Aorta (tissue), 5 donors: ENCODE measurements at regions of chr14 and their contacts with region 1.

Region 1: GRCh38 chr14:26598081-26598795 is 405 bp upstream of the NOVA1 start:
- DNase-seq: peak; percentile 85 to 90
- ATAC-seq: peak; percentile 93
- H3K4me3 ChIP-seq: peak overlapping the region; percentile 83 to 84
- H3K27ac ChIP-seq: peak overlapping the region in 1 of 2 donors; percentile 7
- H3K4me1 ChIP-seq: peaks cover 0 to 1% of the 10 kb centered on the region in 2 donors
- H3K27me3 ChIP-seq: no peaks in the 10 kb centered on the region

Region 2: GRCh38 chr14:26394150-26394810 is 204.0 kb before region 1 on chr14:
- intact Hi-C with region 1: loop called in 1 of 2 experiments (anchors 5 kb)
- DNase-seq: no peak
- ATAC-seq: no peak
- H3K4me3 ChIP-seq: no peak overlapping the region
- H3K27ac ChIP-seq: no peak overlapping the region
- H3K4me1 ChIP-seq: peaks cover 0 to 2% of the 10 kb centered on the region in 2 donors
- H3K27me3 ChIP-seq: no peaks in the 10 kb centered on the region

Region 3: DNA sequence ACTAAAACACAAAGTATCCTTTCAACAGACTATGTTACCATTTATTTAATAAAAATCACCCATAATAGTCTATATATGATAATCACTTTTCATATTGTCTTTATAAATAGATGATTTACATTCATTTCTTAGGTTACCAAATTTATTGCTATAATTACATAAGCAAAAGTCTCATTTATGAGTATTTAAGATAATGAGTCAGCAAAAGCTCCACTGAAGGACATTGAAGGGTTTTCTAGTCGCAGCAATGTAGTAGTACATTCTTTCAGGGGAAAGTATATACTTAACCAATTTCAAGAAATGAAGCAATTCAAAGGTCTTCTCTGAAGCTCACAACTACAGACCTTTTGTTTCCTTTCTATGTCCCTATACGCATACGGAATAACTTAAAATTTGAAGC is 111.3 kb before region 1 on chr14:
- intact Hi-C with region 1: no loop called
- DNase-seq: no peak
- ATAC-seq: no peak
- H3K4me3 ChIP-seq: no peak overlapping the region
- H3K27ac ChIP-seq: no peak overlapping the region
- H3K4me1 ChIP-seq: no peaks in the 10 kb centered on the region
- H3K27me3 ChIP-seq: no peaks in the 10 kb centered on the region

Region 4: DNA sequence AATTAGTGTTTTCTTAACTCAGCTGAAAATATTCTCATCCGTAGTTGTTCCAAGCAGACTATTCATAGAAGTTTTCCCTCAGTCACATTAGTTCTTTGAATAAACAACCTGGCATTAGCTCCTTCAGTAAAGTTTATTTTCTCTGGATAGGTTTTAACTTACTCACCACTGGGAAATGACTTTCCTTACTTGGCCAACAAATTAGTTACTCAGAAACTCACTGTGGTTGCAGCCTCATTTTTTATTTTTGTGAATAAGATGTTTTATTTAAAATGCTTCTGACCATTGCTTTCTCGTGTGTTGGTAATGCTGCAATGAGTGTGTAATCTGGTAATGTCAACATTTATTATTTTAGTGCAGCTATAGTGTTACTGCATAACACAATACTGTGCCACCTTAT is 75.3 kb before region 1 on chr14:
- intact Hi-C with region 1: loop called (anchors 5 kb)
- DNase-seq: no peak
- ATAC-seq: peak; percentile 78
- H3K4me3 ChIP-seq: no peak overlapping the region
- H3K27ac ChIP-seq: no peak overlapping the region
- H3K4me1 ChIP-seq: peaks cover 4 to 5% of the 10 kb centered on the region in 2 donors
- H3K27me3 ChIP-seq: no peaks in the 10 kb centered on the region

Region 5: DNA sequence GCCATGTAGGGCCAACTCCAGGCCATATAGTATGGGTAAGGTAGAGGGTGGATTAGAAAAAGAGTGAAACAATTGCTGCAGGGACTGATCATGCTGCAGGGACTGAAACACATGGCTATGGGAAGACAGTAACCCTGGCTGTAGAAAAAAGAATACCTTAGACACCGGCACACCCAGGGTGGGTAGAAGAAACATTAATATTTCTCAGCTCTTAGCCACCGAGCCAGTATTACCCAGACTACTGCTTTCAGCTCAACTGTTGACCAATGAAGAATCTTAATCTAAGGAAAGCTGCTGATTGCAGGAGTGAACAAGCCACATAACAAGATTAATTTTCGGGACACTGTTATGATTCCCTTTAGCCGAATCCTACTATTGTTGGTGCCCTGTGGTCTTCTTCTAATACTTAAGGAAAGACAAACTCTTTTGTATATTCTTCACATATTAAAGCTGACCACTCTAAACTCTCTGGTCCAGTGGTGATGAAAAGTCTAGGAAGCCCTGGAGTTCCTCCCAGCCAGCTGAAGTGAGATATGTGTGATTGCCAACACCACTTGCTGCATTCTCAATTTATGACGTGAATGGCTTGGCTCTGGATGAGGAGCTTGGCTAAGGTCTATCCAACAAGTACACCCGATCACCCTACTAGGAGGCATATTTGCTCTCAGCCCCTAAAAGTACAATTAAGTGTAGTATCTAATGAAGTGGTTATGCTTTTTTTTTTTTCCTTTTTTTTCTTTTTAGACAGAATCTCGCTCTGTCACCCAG is 69.6 kb before region 1 on chr14:
- intact Hi-C with region 1: loop called (anchors 5 kb)
- DNase-seq: peak in 1 of 2 donors; percentile 65
- ATAC-seq: peak; percentile 80
- H3K4me3 ChIP-seq: no peak overlapping the region
- H3K27ac ChIP-seq: peak overlapping the region; percentile 5 to 26
- H3K4me1 ChIP-seq: peaks cover 4 to 9% of the 10 kb centered on the region in 2 donors
- H3K27me3 ChIP-seq: no peaks in the 10 kb centered on the region

Region 6: GRCh38 chr14:26611259-26611658 is 13.0 kb after region 1 on chr14:
- intact Hi-C with region 1: no loop called
- DNase-seq: no peak
- ATAC-seq: no peak
- H3K4me3 ChIP-seq: no peak overlapping the region
- H3K27ac ChIP-seq: no peak overlapping the region
- H3K4me1 ChIP-seq: no peaks in the 10 kb centered on the region
- H3K27me3 ChIP-seq: no peaks in the 10 kb centered on the region

Region 7: DNA sequence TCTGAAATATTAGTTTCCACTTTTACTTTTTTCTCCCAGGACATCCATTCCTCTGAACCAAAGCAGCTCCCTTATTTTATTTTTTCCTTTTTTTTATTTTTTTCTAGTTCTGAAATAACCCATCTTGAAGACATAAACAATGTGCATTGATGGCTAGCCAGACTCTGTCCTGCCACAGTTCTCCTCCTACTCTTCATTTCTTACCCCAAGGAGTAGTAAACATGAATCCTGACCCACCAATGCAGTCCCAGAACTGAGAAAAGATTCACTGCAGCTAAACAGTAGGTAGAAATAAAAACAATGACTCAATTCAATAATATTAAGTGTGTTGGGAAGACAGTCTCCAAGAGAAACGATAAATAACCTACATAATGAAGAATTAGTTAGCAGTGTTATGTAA is 65.3 kb after region 1 on chr14:
- intact Hi-C with region 1: no loop called
- DNase-seq: no peak
- ATAC-seq: no peak
- H3K4me3 ChIP-seq: no peak overlapping the region
- H3K27ac ChIP-seq: no peak overlapping the region
- H3K4me1 ChIP-seq: no peaks in the 10 kb centered on the region
- H3K27me3 ChIP-seq: no peaks in the 10 kb centered on the region

Region 8: DNA sequence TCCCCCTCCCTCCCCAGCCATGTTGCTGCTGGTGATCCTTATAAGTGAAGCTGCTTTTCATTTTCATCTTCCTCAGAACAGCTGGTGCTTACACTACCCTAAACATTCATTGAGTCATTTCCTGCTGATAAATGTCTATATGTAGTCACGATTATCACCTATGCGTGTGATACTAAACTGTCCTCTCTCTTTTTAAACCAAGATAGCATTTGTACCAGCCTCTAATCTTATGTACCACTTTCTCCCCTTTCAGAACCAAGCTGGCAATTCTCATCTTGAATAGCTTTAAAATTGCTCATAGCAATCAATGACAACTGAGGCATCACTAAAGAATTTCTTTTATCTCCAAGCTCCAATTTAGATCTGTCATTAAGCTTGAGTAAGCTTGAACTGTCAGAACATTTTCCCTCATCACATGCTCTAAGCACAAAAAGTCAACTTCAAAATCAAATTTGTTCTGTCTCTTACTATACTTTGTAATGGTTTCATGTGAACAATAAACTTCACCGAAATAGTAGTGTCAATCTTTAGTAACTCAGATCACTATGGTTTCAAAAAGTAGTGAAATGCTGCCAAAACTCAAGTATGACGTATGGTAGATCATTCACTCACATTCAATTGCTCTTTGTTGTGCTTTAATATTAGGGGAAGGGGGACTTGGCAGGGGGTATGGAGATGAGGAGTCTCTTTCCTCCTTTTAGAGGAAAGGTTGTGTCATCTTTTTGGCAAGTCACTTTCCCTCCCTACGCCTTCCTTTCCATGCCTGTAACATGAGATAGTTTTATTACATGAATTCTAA is 177.7 kb after region 1 on chr14:
- intact Hi-C with region 1: no loop called
- DNase-seq: no peak
- ATAC-seq: no peak
- H3K4me3 ChIP-seq: no peak overlapping the region
- H3K27ac ChIP-seq: no peak overlapping the region
- H3K4me1 ChIP-seq: no peaks in the 10 kb centered on the region
- H3K27me3 ChIP-seq: no peaks in the 10 kb centered on the region